HepG2 (cell line): ENCODE measurements at regions of chr7 and their contacts with region 1.

Region 1: GRCh38 chr7:115059321-115059720 is 137.4 kb downstream of the MDFIC start:
- DNase-seq: no peak
- ATAC-seq: no peak
- H3K4me3 ChIP-seq: no peak overlapping the region
- H3K27ac ChIP-seq: no peak overlapping the region
- H3K4me1 ChIP-seq: no peaks in the 10 kb centered on the region
- H3K27me3 ChIP-seq: no peaks in the 10 kb centered on the region; a peak in 1 of 5 replicates
- CTCF ChIP-seq: no peak
- EP300 ChIP-seq: no peak
- POLR2A ChIP-seq: no peak
- RAD21 ChIP-seq: no peak

Region 2: GRCh38 chr7:115102738-115103137 is 43.4 kb after region 1 on chr7:
- CTCF ChIA-PET with region 1: no interaction called
- POLR2A ChIA-PET with region 1: no interaction called
- in situ Hi-C with region 1: no loop called
- intact Hi-C with region 1: loop called (anchors 1 kb)
- DNase-seq: no peak
- ATAC-seq: no peak
- H3K4me3 ChIP-seq: no peak overlapping the region
- H3K27ac ChIP-seq: no peak overlapping the region
- H3K4me1 ChIP-seq: peaks cover 8% of the 10 kb centered on the region; the same call in 1 of the 2 replicates
- H3K27me3 ChIP-seq: no peaks in the 10 kb centered on the region; a peak in 1 of 5 replicates
- CTCF ChIP-seq: no peak
- EP300 ChIP-seq: no peak
- POLR2A ChIP-seq: no peak
- RAD21 ChIP-seq: no peak

Region 3: GRCh38 chr7:115198143-115198542 is 138.8 kb after region 1 on chr7:
- CTCF ChIA-PET with region 1: no interaction called
- POLR2A ChIA-PET with region 1: no interaction called
- in situ Hi-C with region 1: no loop called
- intact Hi-C with region 1: no loop called
- DNase-seq: no peak
- ATAC-seq: no peak
- H3K4me3 ChIP-seq: no peak overlapping the region
- H3K27ac ChIP-seq: no peak overlapping the region
- H3K4me1 ChIP-seq: no peaks in the 10 kb centered on the region
- H3K27me3 ChIP-seq: no peaks in the 10 kb centered on the region; a peak in 1 of 5 replicates
- CTCF ChIP-seq: no peak
- EP300 ChIP-seq: no peak
- POLR2A ChIP-seq: no peak
- RAD21 ChIP-seq: no peak

Region 4: GRCh38 chr7:115332691-115333090 is 273.4 kb after region 1 on chr7:
- CTCF ChIA-PET with region 1: no interaction called
- POLR2A ChIA-PET with region 1: no interaction called
- in situ Hi-C with region 1: no loop called
- intact Hi-C with region 1: no loop called
- DNase-seq: no peak
- ATAC-seq: no peak
- H3K4me3 ChIP-seq: no peak overlapping the region
- H3K27ac ChIP-seq: no peak overlapping the region
- H3K4me1 ChIP-seq: no peaks in the 10 kb centered on the region
- H3K27me3 ChIP-seq: no peaks in the 10 kb centered on the region
- CTCF ChIP-seq: no peak
- EP300 ChIP-seq: no peak
- POLR2A ChIP-seq: no peak
- RAD21 ChIP-seq: no peak